ENCODE measurements at regions of chr7 and their contacts with region 1.

Region 1: GRCh38 chr7:16918288-16918895 is 36.6 kb upstream of the AGR3 start:
- DNase-seq: peak; percentile 58
- H3K4me3 ChIP-seq: no peak overlapping the region
- H3K27ac ChIP-seq: no peak overlapping the region
- H3K4me1 ChIP-seq: peaks cover 3% of the 10 kb centered on the region
- H3K27me3 ChIP-seq: no peaks in the 10 kb centered on the region
- CTCF ChIP-seq: peak; percentile 17 to 44
- POLR2A ChIP-seq: no peak

Region 2: DNA sequence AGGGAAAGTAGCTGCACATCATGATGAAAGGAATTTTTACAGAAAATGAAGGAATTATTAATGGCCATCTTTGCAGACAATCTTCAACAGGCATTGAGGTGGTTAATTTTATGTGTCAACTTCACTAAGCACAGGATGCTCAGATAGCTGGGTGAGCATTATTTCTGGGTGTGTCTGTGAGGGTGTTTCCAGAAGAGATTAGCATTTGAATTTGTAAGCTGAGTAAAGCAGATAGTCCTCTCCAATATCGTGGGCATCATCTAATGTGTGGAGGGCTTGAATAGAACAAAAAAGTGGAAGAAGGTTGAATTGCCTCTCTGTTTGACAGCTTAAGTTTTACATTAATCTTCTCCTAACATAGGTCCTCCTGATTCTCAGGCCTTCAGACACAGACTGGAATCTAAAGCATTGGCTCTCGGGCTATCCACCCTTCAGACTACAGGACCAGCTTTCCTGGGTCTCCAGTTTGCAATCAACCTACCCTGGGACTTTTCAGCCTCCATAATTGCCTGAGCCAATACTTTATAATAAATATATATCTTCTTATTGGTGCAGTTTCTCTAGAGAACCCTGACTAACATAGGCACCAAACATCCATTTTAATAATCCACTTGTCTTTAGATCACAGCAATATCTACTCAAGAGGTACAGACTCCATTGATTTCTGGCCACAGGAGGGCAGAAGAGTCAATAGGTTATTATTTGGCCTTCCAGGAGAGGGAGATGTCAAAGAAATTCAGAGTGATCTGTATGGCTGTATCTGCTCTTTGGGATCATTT is 486.6 kb before region 1 on chr7:
- CTCF ChIA-PET with region 1: no interaction called
- POLR2A ChIA-PET with region 1: no interaction called
- dilution Hi-C with region 1: no loop called
- intact Hi-C with region 1: loop called (anchors 10 kb)
- DNase-seq: peak; percentile 18
- H3K4me3 ChIP-seq: no peak overlapping the region
- H3K27ac ChIP-seq: no peak overlapping the region
- H3K4me1 ChIP-seq: no peaks in the 10 kb centered on the region
- H3K27me3 ChIP-seq: no peaks in the 10 kb centered on the region
- CTCF ChIP-seq: peak in 1 of 2 donors; percentile 17
- POLR2A ChIP-seq: no peak

Region 3: GRCh38 chr7:16587790-16588189 is 330.6 kb before region 1 on chr7:
- CTCF ChIA-PET with region 1: no interaction called
- POLR2A ChIA-PET with region 1: no interaction called
- dilution Hi-C with region 1: no loop called
- intact Hi-C with region 1: no loop called
- DNase-seq: no peak
- H3K4me3 ChIP-seq: no peak overlapping the region
- H3K27ac ChIP-seq: no peak overlapping the region
- H3K4me1 ChIP-seq: peaks cover 2% of the 10 kb centered on the region
- H3K27me3 ChIP-seq: no peaks in the 10 kb centered on the region
- CTCF ChIP-seq: no peak
- POLR2A ChIP-seq: no peak

Region 4: DNA sequence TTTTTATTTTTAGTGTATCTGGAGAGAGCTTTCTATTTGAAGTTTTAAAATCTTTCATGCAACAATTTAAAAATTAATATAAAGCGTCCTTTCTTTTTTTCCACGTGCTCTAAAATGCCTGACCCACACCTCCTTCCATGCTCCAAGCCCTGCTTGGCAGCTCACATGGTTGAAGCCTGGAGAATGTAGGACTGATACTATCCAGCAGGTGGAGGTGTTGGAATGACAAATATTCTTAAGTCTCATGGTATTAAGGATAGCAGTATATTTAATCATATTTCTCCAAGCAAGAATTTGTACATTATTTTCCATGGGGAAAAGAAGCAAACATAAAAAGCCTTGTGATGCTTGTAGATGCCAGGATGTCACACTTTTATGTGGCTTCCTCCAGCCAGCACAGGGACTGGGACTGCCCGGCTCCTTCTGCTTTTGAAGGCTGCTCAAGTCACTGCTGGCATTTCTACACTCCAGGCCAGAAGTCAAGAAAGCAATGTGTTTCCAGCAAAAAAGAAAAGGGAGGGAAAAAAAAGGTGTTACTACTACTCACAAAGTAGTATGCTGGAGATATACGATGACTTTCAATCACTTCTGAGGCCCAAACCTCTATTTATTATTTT is 222.7 kb before region 1 on chr7:
- CTCF ChIA-PET with region 1: interaction called, 41 read pairs
- POLR2A ChIA-PET with region 1: no interaction called
- dilution Hi-C with region 1: no loop called
- intact Hi-C with region 1: loop called (anchors 1 kb)
- DNase-seq: peak; percentile 74
- H3K4me3 ChIP-seq: no peak overlapping the region
- H3K27ac ChIP-seq: no peak overlapping the region
- H3K4me1 ChIP-seq: peaks cover 7% of the 10 kb centered on the region
- H3K27me3 ChIP-seq: no peaks in the 10 kb centered on the region
- CTCF ChIP-seq: peak; percentile 44 to 54
- POLR2A ChIP-seq: no peak

Region 5: DNA sequence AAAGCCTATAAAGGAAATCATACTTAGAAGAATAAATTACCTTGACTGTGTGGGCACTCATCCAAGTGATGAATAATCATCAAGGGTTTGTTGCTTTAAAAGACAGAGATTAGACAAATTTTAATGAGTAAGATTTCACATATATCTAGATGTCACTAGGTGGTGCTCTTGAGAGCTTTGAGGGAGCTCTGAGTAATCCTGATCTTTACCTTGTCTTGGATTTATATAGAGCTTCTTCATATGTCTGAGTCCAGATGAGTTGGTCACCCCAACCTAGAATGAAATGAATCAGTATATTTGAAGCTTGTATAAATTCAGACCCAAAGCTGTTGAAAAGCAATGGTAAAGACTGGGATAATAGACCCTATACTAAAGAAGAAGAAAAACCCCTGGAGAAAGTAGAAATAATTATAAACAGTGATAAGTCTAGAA is 117.3 kb before region 1 on chr7:
- CTCF ChIA-PET with region 1: interaction called, 149 read pairs
- POLR2A ChIA-PET with region 1: no interaction called
- dilution Hi-C with region 1: no loop called
- intact Hi-C with region 1: loop called (anchors 1 kb)
- DNase-seq: peak; percentile 57
- H3K4me3 ChIP-seq: no peak overlapping the region
- H3K27ac ChIP-seq: no peak overlapping the region
- H3K4me1 ChIP-seq: no peaks in the 10 kb centered on the region
- H3K27me3 ChIP-seq: peaks cover 2 to 4% of the 10 kb centered on the region in 2 experiments
- CTCF ChIP-seq: peak; percentile 28 to 29
- POLR2A ChIP-seq: no peak